WTC11 (cell line): ENCODE measurements at regions of chr3 and their contacts with region 1.

Region 1: DNA sequence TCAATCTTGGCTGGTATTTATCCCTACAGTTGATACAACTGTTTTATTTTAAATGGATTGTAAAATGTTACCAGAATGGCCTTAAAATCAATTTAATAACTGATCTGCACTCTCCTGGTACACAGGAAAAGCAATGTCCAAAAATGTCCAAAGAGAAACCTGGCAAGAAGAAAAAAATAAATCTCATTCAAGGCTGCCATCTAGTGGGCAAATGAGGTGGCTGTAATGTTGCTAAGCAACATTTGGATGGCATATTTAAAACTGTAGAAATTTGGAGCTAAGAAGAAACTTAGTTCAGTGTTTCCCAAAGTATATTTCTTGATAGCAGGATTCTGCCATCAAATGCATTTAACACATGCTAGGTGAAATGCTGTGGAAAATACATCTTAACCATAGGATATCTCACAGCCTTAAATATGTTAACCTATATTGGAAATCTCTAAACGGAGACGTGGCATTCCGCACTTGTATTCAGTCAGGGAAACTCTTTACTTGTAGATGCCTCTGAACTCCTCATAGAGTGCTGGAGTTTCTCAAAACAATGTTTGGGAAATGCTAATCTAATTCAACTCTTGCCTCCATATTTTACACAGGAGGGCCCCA is 216.8 kb downstream of the ERC2 start:
- DNase-seq: peak; percentile 25
- ATAC-seq: 0 out of 2 replicates have a peak, but pooled peaks have one; percentile 15
- H3K4me3 Mint-ChIP-seq: no peak overlapping the region
- H3K27ac Mint-ChIP-seq: no peak overlapping the region
- H3K4me1 Mint-ChIP-seq: peaks cover 50% of the 10 kb centered on the region
- H3K27me3 Mint-ChIP-seq: no peaks in the 10 kb centered on the region
- CTCF ChIP-seq: peak; percentile 75

Region 2: GRCh38 chr3:55947406-55947805 is 304.0 kb before region 1 on chr3:
- CTCF ChIA-PET with region 1: interaction called, 10 read pairs
- POLR2A ChIA-PET with region 1: no interaction called
- DNase-seq: no peak
- ATAC-seq: no peak
- H3K4me3 Mint-ChIP-seq: no peak overlapping the region
- H3K27ac Mint-ChIP-seq: no peak overlapping the region
- H3K4me1 Mint-ChIP-seq: no peaks in the 10 kb centered on the region
- H3K27me3 Mint-ChIP-seq: no peaks in the 10 kb centered on the region
- CTCF ChIP-seq: no peak

Region 3: GRCh38 chr3:56042326-56042951 is 209.0 kb before region 1 on chr3:
- CTCF ChIA-PET with region 1: interaction called, 11 read pairs
- POLR2A ChIA-PET with region 1: no interaction called
- DNase-seq: no peak
- ATAC-seq: peak; percentile 97
- H3K4me3 Mint-ChIP-seq: no peak overlapping the region
- H3K27ac Mint-ChIP-seq: peak overlapping the region; percentile 31; the same call in 1 of the 2 replicates
- H3K4me1 Mint-ChIP-seq: peaks cover 43% of the 10 kb centered on the region
- H3K27me3 Mint-ChIP-seq: no peaks in the 10 kb centered on the region
- CTCF ChIP-seq: no peak

Region 4: GRCh38 chr3:56055482-56056350 is 195.7 kb before region 1 on chr3:
- CTCF ChIA-PET with region 1: interaction called, 18 read pairs
- POLR2A ChIA-PET with region 1: no interaction called
- DNase-seq: no peak
- ATAC-seq: peak; percentile 66
- H3K4me3 Mint-ChIP-seq: no peak overlapping the region
- H3K27ac Mint-ChIP-seq: peak overlapping the region; percentile 32
- H3K4me1 Mint-ChIP-seq: peaks cover 49% of the 10 kb centered on the region
- H3K27me3 Mint-ChIP-seq: no peaks in the 10 kb centered on the region
- CTCF ChIP-seq: no peak

Region 5: GRCh38 chr3:56238299-56238698 is 13.1 kb before region 1 on chr3:
- CTCF ChIA-PET with region 1: interaction called, 23 read pairs
- POLR2A ChIA-PET with region 1: no interaction called
- DNase-seq: no peak
- ATAC-seq: peak; percentile 52
- H3K4me3 Mint-ChIP-seq: no peak overlapping the region
- H3K27ac Mint-ChIP-seq: no peak overlapping the region
- H3K4me1 Mint-ChIP-seq: peaks cover 14% of the 10 kb centered on the region
- H3K27me3 Mint-ChIP-seq: no peaks in the 10 kb centered on the region
- CTCF ChIP-seq: no peak

Region 6: GRCh38 chr3:56303487-56303886 is 52.0 kb after region 1 on chr3:
- CTCF ChIA-PET with region 1: interaction called, 26 read pairs
- POLR2A ChIA-PET with region 1: no interaction called
- DNase-seq: peak; percentile 72
- ATAC-seq: peak; percentile 98
- H3K4me3 Mint-ChIP-seq: no peak overlapping the region
- H3K27ac Mint-ChIP-seq: peak overlapping the region; percentile 71; the same call in 1 of the 2 replicates
- H3K4me1 Mint-ChIP-seq: peaks cover 25% of the 10 kb centered on the region
- H3K27me3 Mint-ChIP-seq: no peaks in the 10 kb centered on the region
- CTCF ChIP-seq: peak; percentile 61